Naive thymus-derived CD4-positive, alpha-beta T cell (primary cell): ENCODE measurements at regions of chr11 and their contacts with region 1.

Region 1: GRCh38 chr11:33310720-33311500 is 53.7 kb downstream of the HIPK3 start:
- DNase-seq: no peak
- ATAC-seq: no peak
- H3K4me3 ChIP-seq: no peak overlapping the region
- H3K4me3 Mint-ChIP-seq: peak overlapping the region in 3 of 10 donors; percentile 19 to 35 (median 33)
- H3K27ac ChIP-seq: no peak overlapping the region
- H3K27ac Mint-ChIP-seq: peak overlapping the region in 1 of 9 donors; percentile 76
- H3K4me1 ChIP-seq: peaks cover 4 to 7% of the 10 kb centered on the region in 2 donors
- H3K4me1 Mint-ChIP-seq: peaks cover 5 to 77% (median 68%) of the 10 kb centered on the region in 7 donors
- H3K27me3 ChIP-seq: no peaks in the 10 kb centered on the region
- H3K27me3 Mint-ChIP-seq: no peaks in the 10 kb centered on the region

Region 2: DNA sequence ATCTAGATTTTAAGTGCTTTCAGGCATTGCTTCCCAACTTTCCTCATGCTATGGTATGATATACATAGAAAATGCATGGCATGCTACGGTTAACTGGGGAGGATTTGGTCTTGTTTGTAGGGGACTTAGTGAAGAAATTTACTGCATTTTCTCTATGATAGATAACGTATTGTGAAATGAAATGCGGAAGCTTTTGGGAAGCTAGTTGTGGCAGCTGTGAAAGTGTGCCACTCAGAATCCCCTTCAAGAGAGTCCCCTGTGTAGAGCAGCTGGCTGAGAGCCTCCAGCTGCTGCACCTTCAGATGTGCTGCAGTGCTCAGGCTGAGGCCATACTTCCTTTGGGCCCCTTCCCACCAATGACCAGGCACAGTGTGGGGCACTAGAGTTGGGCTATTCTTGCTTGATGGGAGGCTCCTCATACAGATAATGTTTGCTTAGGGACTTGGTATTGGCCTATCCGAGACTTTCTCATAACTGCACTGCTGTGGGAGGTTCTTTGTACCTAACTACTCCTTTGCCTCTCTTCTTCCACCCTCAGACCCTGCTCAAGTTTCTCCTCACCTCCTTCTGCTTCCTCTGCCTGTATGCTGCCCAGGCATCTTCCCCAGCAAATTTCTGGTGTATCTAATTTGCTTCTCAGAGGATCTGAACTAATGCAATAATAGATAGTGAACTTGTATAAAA is 13.5 kb after region 1 on chr11:
- CTCF ChIA-PET with region 1: no interaction called
- POLR2A ChIA-PET with region 1: no interaction called
- intact Hi-C with region 1: loop called in 1 of 2 experiments (anchors 2 kb)
- DNase-seq: no peak
- ATAC-seq: peak; percentile 22
- H3K4me3 ChIP-seq: no peak overlapping the region
- H3K4me3 Mint-ChIP-seq: no peak overlapping the region
- H3K27ac ChIP-seq: no peak overlapping the region
- H3K27ac Mint-ChIP-seq: peak overlapping the region in 5 of 9 donors; percentile 8 to 71 (median 46)
- H3K4me1 ChIP-seq: no peaks in the 10 kb centered on the region
- H3K4me1 Mint-ChIP-seq: peaks cover 0 to 45% (median 39%) of the 10 kb centered on the region in 7 donors
- H3K27me3 ChIP-seq: no peaks in the 10 kb centered on the region
- H3K27me3 Mint-ChIP-seq: no peaks in the 10 kb centered on the region

Region 3: GRCh38 chr11:33402066-33402465 is 91.2 kb after region 1 on chr11:
- CTCF ChIA-PET with region 1: no interaction called
- POLR2A ChIA-PET with region 1: no interaction called
- intact Hi-C with region 1: no loop called
- DNase-seq: no peak
- ATAC-seq: no peak
- H3K4me3 ChIP-seq: no peak overlapping the region
- H3K4me3 Mint-ChIP-seq: no peak overlapping the region
- H3K27ac ChIP-seq: no peak overlapping the region
- H3K27ac Mint-ChIP-seq: no peak overlapping the region
- H3K4me1 ChIP-seq: no peaks in the 10 kb centered on the region
- H3K4me1 Mint-ChIP-seq: no peaks in the 10 kb centered on the region
- H3K27me3 ChIP-seq: no peaks in the 10 kb centered on the region
- H3K27me3 Mint-ChIP-seq: peaks cover 0 to 22% (median 15%) of the 10 kb centered on the region in 5 donors

Region 4: DNA sequence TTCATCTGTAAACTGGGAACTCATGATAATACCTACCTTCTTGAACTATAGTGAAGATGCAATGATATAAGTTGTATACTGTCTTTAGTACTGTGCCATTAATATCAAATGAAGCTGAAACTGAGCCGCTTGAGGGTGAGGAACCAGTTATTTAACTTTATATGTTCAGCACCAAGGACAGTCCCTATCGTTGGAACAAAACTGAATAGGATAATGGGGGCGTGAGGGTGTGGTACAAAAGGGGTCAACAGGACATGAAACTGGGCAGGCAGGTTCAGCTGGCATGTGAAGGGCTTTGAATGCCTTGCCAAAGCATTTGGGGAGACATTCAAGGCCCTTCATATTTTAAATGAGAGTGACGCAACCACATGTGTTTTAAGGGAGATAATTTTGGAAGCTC is 277.2 kb after region 1 on chr11:
- CTCF ChIA-PET with region 1: no interaction called
- POLR2A ChIA-PET with region 1: no interaction called
- intact Hi-C with region 1: no loop called
- DNase-seq: no peak
- ATAC-seq: no peak
- H3K4me3 ChIP-seq: no peak overlapping the region
- H3K4me3 Mint-ChIP-seq: no peak overlapping the region
- H3K27ac ChIP-seq: no peak overlapping the region
- H3K27ac Mint-ChIP-seq: no peak overlapping the region
- H3K4me1 ChIP-seq: no peaks in the 10 kb centered on the region
- H3K4me1 Mint-ChIP-seq: no peaks in the 10 kb centered on the region
- H3K27me3 ChIP-seq: no peaks in the 10 kb centered on the region
- H3K27me3 Mint-ChIP-seq: peaks cover 0 to 20% (median 11%) of the 10 kb centered on the region in 5 donors